ENCODE measurements at regions of chr19 and their contacts with region 1.

Region 1: GRCh38 chr19:42121656-42122069 is 10.6 kb downstream of the POU2F2 start:
- DNase-seq: peak; percentile 80
- H3K4me3 Mint-ChIP-seq: peak overlapping the region; percentile 73
- H3K27ac Mint-ChIP-seq: peak overlapping the region; percentile 94
- H3K4me1 Mint-ChIP-seq: peaks cover 44% of the 10 kb centered on the region
- H3K27me3 Mint-ChIP-seq: no peaks in the 10 kb centered on the region

Region 2: DNA sequence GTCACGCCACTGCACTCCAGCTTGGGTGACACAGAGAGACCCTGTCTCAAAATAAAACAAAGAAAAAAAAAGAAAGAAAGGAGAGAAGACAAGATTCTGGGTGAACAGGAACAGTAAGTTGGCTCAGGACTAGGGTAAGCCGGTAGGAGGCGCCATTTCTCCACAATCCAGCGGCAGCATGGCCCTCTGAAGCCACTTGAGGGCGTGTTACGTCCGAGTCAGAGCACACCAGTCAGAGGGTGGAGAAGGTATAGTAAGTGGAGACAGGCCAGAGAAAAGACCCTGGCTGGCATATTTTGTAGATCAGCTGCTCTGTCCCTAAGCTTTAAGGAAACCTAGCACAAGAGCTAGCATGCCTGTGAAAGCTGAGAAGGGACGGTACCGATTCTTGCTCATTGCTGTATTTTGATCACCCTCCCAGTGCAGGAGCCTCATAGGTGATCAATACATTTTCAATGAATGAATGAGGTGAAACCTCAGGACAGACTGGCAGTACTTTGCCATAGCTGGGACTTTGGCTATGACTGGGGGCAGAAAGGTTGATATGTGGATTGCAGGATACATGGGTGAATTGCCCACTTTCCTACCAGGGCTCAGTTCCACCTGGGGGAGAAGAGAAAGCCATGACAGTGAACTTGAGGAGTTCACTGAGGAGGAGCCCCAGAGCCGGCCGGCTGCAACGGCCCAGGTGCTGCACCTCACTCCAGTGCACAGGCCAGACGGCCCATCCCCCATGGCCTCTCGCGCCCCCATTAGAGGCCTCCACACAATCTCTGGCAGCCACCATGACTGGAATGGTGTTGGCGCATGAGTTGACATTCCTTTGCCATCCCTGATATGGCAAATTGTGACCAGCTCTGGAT is 12.9 kb before region 1 on chr19:
- CTCF ChIA-PET with region 1: interaction called, 19 read pairs
- POLR2A ChIA-PET with region 1: interaction called, 5 read pairs
- DNase-seq: peak; percentile 92
- H3K4me3 Mint-ChIP-seq: no peak overlapping the region
- H3K27ac Mint-ChIP-seq: no peak overlapping the region
- H3K4me1 Mint-ChIP-seq: peaks cover 34% of the 10 kb centered on the region
- H3K27me3 Mint-ChIP-seq: no peaks in the 10 kb centered on the region

Region 3: GRCh38 chr19:42149447-42150202 is 28.0 kb after region 1 on chr19:
- CTCF ChIA-PET with region 1: no interaction called
- POLR2A ChIA-PET with region 1: no interaction called
- DNase-seq: no peak
- H3K4me3 Mint-ChIP-seq: no peak overlapping the region
- H3K27ac Mint-ChIP-seq: no peak overlapping the region
- H3K4me1 Mint-ChIP-seq: peaks cover 10% of the 10 kb centered on the region
- H3K27me3 Mint-ChIP-seq: peaks cover 23% of the 10 kb centered on the region

Region 4: DNA sequence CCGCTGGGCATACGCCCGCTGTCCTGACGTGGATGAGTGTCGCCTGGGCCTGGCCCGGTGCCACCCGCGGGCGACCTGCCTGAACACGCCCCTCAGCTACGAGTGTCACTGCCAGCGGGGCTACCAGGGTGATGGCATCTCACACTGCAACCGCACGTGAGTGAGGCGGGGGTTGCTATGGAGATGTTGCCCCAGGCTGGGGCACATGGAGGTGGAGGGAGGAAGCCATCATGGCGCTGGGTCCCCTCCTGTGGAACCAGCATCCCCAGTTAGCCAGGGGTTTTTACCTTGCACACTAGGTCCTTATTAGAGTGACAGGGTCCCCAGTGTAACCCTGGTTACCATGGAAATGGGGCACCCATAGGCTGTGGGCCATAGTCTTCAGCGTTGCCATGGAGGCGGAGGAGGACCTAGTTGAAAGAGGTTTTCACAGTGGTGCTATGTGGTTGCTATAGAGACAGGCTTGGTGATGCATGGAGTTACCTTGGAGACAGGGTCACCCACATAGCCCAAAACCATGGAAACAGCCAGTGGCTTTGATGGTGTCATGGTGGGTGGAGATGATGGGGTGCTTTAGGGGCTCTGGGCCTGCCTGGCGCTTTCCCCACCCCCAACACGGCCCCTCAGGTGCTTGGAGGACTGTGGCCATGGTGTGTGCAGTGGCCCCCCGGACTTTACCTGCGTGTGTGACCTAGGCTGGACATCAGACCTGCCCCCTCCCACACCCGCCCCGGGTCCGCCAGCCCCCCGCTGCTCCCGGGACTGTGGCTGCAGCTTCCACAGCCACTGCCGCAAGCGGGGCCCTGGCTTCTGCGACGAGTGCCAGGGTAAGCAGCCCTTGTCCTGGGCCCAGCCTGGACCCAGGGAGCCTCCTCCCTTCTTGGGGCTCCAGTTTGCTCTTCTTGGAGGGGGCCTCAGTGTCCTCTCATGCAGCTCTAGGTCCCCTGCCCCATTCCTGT is 230.9 kb after region 1 on chr19:
- CTCF ChIA-PET with region 1: no interaction called
- POLR2A ChIA-PET with region 1: no interaction called
- DNase-seq: no peak
- H3K4me3 Mint-ChIP-seq: no peak overlapping the region
- H3K27ac Mint-ChIP-seq: no peak overlapping the region
- H3K4me1 Mint-ChIP-seq: no peaks in the 10 kb centered on the region
- H3K27me3 Mint-ChIP-seq: no peaks in the 10 kb centered on the region

Measured in activated CD4-positive, alpha-beta memory T cell treated with anti-CD3 and anti-CD28 coated beads, Interleukin-2, amount 10 ng/mL, durations not matched to agents 7 days and 5 days (primary cell).